Panc1 (cell line): ENCODE measurements at regions of chr11 and their contacts with region 1.

Region 1: DNA sequence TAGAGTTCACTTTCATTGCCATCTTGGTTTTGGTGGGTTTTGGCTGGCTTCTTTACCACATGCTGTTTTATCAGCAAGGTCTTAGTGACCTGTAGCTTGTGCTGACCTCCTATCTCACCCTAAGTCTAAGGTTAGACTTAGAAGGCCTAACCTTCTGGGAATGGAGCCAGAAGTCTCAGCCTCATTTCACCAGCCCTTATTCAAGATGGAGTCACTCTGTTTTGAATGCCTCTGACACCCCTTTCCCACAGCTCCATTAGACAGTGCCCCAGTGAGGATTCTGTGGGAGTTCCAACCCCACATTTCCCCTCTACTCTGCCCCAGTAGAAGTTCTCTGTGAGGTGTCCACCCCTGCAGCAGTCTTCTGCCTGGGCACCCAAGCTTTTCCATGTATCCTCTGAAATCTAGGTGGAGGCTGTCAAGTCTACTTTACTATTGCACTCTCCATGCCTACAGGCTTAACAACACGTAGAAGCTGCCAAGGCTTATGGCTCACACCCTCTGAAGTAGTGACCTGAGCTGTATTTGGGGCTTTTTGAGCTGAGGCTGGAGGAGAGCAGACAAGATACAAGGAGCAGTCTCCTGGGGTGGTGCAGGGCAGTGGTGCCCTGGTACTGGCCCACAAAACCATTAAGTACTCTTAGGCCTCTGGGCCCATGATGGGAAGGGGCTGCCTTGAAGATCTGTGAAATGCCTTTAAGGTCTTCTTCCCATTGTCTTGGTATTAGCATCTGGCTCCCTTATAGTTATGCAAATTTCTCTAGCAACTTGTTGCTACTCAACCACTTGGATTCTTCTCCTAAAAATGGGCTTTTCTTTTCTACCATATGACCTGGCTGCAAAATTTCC is 65.9 kb upstream of the SC5D start:
- DNase-seq: no peak
- ATAC-seq: peak; percentile 66
- H3K4me3 ChIP-seq: no peak overlapping the region
- H3K27ac ChIP-seq: no peak overlapping the region
- H3K4me1 ChIP-seq: no peaks in the 10 kb centered on the region
- H3K27me3 ChIP-seq: peaks cover 33% of the 10 kb centered on the region
- CTCF ChIP-seq: no peak

Region 2: GRCh38 chr11:120261931-120262330 is 964.7 kb before region 1 on chr11:
- CTCF ChIA-PET with region 1: no interaction called
- POLR2A ChIA-PET with region 1: no interaction called
- in situ Hi-C with region 1: no loop called
- intact Hi-C with region 1: loop called (anchors 10 kb)
- DNase-seq: no peak
- ATAC-seq: no peak
- H3K4me3 ChIP-seq: no peak overlapping the region
- H3K27ac ChIP-seq: no peak overlapping the region
- H3K4me1 ChIP-seq: no peaks in the 10 kb centered on the region
- H3K27me3 ChIP-seq: peaks cover 39% of the 10 kb centered on the region
- CTCF ChIP-seq: no peak

Region 3: DNA sequence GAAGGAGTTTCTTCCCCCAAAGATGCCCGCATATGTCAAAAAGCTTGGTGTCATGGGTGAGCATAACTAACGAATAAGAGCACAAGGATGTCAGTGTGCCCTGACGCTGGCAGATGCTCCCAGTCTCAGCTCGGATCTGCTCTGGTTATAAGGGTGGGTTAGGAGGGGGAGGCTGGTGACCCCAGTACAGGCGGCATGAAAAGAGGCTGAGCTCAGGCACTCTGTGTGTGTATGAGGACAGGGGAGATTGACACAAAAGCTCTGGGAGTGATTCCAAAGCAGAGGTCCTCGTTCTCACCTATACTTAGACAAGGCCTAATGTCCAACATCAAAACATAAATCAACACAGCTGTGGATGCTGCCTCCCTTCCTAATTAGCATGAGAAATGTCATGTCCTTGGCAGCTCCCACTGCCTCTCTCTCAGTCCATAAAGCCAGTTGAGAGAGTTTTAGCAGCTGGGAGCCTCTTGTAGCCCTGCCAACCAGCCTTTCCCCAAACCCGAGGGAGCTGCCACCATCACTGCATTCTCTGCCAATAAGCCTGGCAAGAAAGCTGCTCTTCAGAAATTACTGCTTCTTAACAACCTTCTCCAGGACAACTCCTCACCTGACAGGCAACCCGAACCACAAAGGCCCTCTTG is 125.7 kb after region 1 on chr11:
- CTCF ChIA-PET with region 1: no interaction called
- POLR2A ChIA-PET with region 1: no interaction called
- in situ Hi-C with region 1: no loop called
- intact Hi-C with region 1: no loop called
- DNase-seq: no peak
- ATAC-seq: no peak
- H3K4me3 ChIP-seq: no peak overlapping the region
- H3K27ac ChIP-seq: no peak overlapping the region
- H3K4me1 ChIP-seq: no peaks in the 10 kb centered on the region
- H3K27me3 ChIP-seq: peaks cover 35% of the 10 kb centered on the region
- CTCF ChIP-seq: no peak